Naive thymus-derived CD4-positive, alpha-beta T cell (primary cell): ENCODE measurements at regions of chr17 and their contacts with region 1.

Region 1: DNA sequence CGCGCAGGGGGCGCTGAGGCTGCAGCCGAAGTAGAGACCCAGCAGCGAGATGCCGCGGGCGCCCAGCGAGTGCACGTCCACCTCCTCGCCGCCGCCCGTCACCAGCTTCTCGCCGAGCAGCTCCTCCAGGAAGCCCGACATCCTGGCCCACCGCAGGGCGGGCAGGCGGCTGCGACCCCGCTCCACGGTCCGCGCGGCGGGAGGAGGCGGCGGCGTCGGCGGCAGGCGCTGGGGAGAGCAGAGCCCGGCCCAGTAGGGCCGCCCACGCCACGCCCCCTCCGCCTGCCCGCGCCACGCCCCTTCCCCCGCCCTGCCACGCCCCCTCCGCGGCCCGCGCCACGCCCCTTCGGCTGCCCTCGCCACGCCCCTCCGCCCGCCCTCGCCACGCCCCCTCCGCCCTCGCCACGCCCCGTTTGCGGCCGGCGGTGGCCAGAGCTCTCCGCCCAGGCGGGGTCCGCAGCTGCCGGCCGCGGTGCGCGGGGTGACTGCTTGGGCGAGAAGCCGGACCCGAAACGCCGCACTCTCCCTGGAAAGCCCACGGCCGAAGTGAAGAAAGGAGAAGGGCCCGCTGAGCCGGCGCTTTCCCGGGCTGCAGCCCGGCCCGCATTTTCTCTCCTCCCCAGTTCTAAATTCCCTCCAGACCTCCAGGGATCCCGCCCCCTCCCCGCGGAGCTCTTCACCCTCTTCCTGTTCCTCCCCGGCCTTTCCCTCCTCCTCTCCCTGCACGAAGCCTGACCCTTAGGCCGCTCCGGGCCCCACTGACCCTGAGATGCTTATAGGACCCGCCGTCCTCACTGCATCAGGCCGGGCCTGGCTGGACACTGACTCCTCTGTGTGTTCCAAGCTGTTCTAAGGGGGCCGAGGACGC is at the start of gene NXN:
- DNase-seq: peak; percentile 72 to 96 (median 83)
- ATAC-seq: peak; percentile 99
- H3K4me3 ChIP-seq: peak within 1 kb of the TSS; percentile 50
- H3K4me3 Mint-ChIP-seq: peak within 1 kb of the TSS; percentile 64 to 88 (median 80)
- H3K27ac ChIP-seq: peak within 1 kb of the TSS; percentile 56
- H3K27ac Mint-ChIP-seq: peak within 1 kb of the TSS in 7 of 9 donors; percentile 72 to 88 (median 79)
- H3K4me1 ChIP-seq: peaks cover 8 to 19% of the 10 kb centered on the region in 2 donors
- H3K4me1 Mint-ChIP-seq: peaks cover 13 to 20% (median 15%) of the 10 kb centered on the region in 7 donors
- H3K27me3 ChIP-seq: peaks cover 6 to 11% of the 10 kb centered on the region in 2 donors
- H3K27me3 Mint-ChIP-seq: peaks cover 27 to 42% (median 34%) of the 10 kb centered on the region in 5 donors
- total RNA-seq, gene NXN: 0.10 to 0.84 (median 0.36) TPM in 4 of 5 experiments, not detected in the other

Region 2: GRCh38 chr17:143782-144281 is 835.9 kb before region 1 on chr17:
- CTCF ChIA-PET with region 1: no interaction called
- POLR2A ChIA-PET with region 1: no interaction called
- intact Hi-C with region 1: loop called in 1 of 2 experiments (anchors 2 kb)
- DNase-seq: peak; percentile 72 to 94 (median 82)
- ATAC-seq: peak; percentile 98
- H3K4me3 ChIP-seq: no peak overlapping the region
- H3K4me3 Mint-ChIP-seq: peak overlapping the region in 1 of 10 donors; percentile 60
- H3K27ac ChIP-seq: no peak overlapping the region
- H3K27ac Mint-ChIP-seq: no peak overlapping the region
- H3K4me1 ChIP-seq: peaks cover 0 to 4% of the 10 kb centered on the region in 2 donors
- H3K4me1 Mint-ChIP-seq: peaks cover 0 to 6% (median 3%) of the 10 kb centered on the region in 7 donors
- H3K27me3 ChIP-seq: no peaks in the 10 kb centered on the region
- H3K27me3 Mint-ChIP-seq: peaks cover 0 to 12% (median 0%) of the 10 kb centered on the region in 5 donors

Region 3: GRCh38 chr17:732067-732901 is 247.5 kb before region 1 on chr17 and contains the start of gene TLCD3A:
- CTCF ChIA-PET with region 1: no interaction called
- POLR2A ChIA-PET with region 1: no interaction called
- intact Hi-C with region 1: loop called in 1 of 2 experiments (anchors 5 kb)
- DNase-seq: peak in 6 of 9 donors; percentile 13 to 80 (median 26)
- ATAC-seq: peak; percentile 82
- H3K4me3 ChIP-seq: peak within 1 kb of the TSS; percentile 41
- H3K4me3 Mint-ChIP-seq: peak within 1 kb of the TSS; percentile 67 to 90 (median 84)
- H3K27ac ChIP-seq: peak within 1 kb of the TSS; percentile 29
- H3K27ac Mint-ChIP-seq: peak within 1 kb of the TSS in 3 of 9 donors; percentile 23 to 86 (median 47)
- H3K4me1 ChIP-seq: peaks cover 4 to 9% of the 10 kb centered on the region in 2 donors
- H3K4me1 Mint-ChIP-seq: peaks cover 0 to 35% (median 6%) of the 10 kb centered on the region in 7 donors
- H3K27me3 ChIP-seq: no peaks in the 10 kb centered on the region
- H3K27me3 Mint-ChIP-seq: peaks cover 0 to 9% (median 0%) of the 10 kb centered on the region in 5 donors
- total RNA-seq, gene TLCD3A: 0.54 to 21.5 (median 1.2) TPM

Region 4: DNA sequence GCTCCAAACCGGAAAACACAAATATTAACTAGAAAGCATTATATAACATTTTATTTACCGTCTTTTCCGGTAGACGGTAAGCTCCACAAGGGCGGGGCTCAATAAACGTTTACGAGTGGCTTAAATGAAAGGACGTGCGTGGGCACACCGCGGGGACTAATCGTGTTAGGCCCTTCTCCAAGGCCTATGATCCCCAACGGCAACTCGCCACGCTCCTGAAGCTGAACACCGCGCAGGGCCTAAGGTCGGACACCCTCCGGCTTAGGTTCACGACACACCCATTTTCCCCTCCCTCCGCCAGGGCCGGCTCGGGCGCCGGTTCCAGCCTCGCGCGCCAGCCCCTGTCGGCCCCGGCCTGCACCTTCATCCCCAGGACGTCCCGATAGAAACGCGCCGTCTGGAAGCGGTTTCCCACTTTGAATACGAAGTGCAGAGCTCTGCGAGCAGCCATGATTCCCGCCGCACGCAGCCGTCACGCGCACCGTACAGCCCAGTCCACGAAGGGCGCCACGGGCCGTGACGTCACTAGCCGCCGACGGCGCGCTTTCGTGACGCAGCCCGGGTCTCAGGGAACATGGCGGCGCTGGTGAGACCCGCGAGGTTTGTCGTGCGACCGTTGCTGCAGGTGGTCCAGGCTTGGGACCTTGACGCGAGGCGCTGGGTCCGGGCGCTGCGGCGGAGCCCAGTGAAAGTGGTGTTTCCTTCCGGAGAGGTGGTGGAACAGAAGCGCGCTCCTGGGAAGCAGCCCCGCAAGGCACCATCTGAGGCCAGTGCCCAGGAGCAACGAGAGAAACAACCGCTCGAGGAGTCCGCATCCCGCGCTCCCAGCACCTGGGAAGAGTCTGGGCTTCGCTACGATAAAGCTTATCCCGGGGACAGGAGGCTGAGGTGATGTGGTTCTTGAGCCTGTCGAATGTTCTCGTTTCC is 197.7 kb before region 1 on chr17 and contains the starts of genes GLOD4 and MRM3:
- CTCF ChIA-PET with region 1: interaction called, 14 read pairs
- POLR2A ChIA-PET with region 1: interaction called, 17 read pairs
- intact Hi-C with region 1: loop called (anchors 1 kb)
- DNase-seq: peak; percentile 92 to 100 (median 96)
- ATAC-seq: peak; percentile 98
- H3K4me3 ChIP-seq: peak within 1 kb of the TSS; percentile 88
- H3K4me3 Mint-ChIP-seq: peak within 1 kb of the TSS; percentile 95 to 98 (median 97)
- H3K27ac ChIP-seq: peak within 1 kb of the TSS; percentile 84
- H3K27ac Mint-ChIP-seq: peak within 1 kb of the TSS; percentile 95 to 98 (median 97)
- H3K4me1 ChIP-seq: peaks cover 16 to 24% of the 10 kb centered on the region in 2 donors
- H3K4me1 Mint-ChIP-seq: peaks cover 13 to 54% (median 38%) of the 10 kb centered on the region in 7 donors
- H3K27me3 ChIP-seq: no peaks in the 10 kb centered on the region
- H3K27me3 Mint-ChIP-seq: no peaks in the 10 kb centered on the region
- total RNA-seq, gene GLOD4: 60.1 to 79.0 (median 77.6) TPM
- total RNA-seq, gene MRM3: 19.3 to 47.1 (median 25.9) TPM

Region 5: GRCh38 chr17:879549-880442 is 100.0 kb before region 1 on chr17:
- CTCF ChIA-PET with region 1: interaction called, 23 read pairs
- POLR2A ChIA-PET with region 1: interaction called, 5 read pairs
- intact Hi-C with region 1: loop called (anchors 1 kb)
- DNase-seq: peak; percentile 37 to 71 (median 64)
- ATAC-seq: peak; percentile 77
- H3K4me3 ChIP-seq: no peak overlapping the region
- H3K4me3 Mint-ChIP-seq: peak overlapping the region in 1 of 10 donors; percentile 39
- H3K27ac ChIP-seq: no peak overlapping the region
- H3K27ac Mint-ChIP-seq: no peak overlapping the region
- H3K4me1 ChIP-seq: peaks cover 0 to 3% of the 10 kb centered on the region in 2 donors
- H3K4me1 Mint-ChIP-seq: peaks cover 2 to 12% (median 11%) of the 10 kb centered on the region in 7 donors
- H3K27me3 ChIP-seq: no peaks in the 10 kb centered on the region
- H3K27me3 Mint-ChIP-seq: peaks cover 5 to 32% (median 22%) of the 10 kb centered on the region in 5 donors